ENCODE measurements at regions of chr17 and their contacts with region 1.

Region 1: GRCh38 chr17:2844416-2844815 is 48.2 kb downstream of the RAP1GAP2 start:
- DNase-seq: peak; percentile 39
- ATAC-seq: peak; percentile 10
- H3K4me3 Mint-ChIP-seq: no peak overlapping the region
- H3K27ac Mint-ChIP-seq: peak overlapping the region; percentile 73
- H3K4me1 Mint-ChIP-seq: peaks cover 29% of the 10 kb centered on the region
- H3K27me3 Mint-ChIP-seq: no peaks in the 10 kb centered on the region
- CTCF ChIP-seq: no peak

Region 2: GRCh38 chr17:2828397-2829038 is 15.9 kb before region 1 on chr17:
- CTCF ChIA-PET with region 1: interaction called, 21 read pairs
- POLR2A ChIA-PET with region 1: no interaction called
- DNase-seq: peak; percentile 95
- ATAC-seq: peak; percentile 91
- H3K4me3 Mint-ChIP-seq: no peak overlapping the region
- H3K27ac Mint-ChIP-seq: no peak overlapping the region
- H3K4me1 Mint-ChIP-seq: peaks cover 11% of the 10 kb centered on the region
- H3K27me3 Mint-ChIP-seq: no peaks in the 10 kb centered on the region
- CTCF ChIP-seq: peak; percentile 94

Region 3: DNA sequence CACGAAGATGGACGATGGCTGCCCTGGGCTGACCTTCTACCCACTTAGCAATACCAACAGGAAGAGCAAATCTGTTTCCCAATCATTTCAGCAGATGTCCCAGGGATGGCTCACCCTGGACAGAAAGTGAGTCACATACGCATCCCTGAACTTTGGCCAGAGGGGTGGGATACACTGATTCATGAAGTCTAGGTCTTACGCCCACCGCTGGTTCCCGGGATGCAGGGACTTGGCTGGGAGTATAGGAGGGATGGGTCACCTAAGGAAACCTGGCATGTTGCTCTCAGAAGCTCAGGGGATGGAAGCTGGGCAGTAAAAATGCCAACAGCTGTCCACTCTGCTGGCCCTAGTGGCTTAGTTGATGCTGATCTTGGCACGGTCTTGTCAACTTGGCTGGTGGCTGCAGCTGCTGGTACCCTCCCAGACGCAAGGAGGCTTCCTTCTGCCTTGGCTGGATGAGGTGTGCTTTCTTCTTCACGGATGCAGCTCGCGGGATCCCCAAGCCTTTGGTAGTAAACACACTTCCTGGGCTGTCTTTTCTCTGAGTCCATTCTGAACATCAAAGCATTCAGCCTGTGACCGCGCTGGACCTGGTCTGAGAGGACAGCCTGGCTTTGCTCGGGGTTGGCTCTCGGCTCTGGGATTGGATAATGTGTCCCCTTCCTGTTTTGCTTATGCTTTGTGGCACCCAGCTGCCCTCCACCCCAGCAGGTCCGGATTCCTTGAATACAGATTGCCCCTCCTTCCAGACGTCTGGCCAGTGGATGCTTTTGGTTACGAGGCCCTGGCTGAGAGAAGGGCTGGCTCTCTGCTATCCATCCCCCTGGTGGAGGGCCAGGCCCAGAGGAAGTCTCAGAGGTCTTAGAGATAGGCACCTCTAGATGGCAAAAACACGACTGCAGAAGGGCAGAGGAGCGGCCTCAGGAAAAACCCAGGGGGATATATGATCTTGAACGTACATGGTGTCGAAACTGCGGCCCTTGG is 23.3 kb after region 1 on chr17:
- CTCF ChIA-PET with region 1: interaction called, 53 read pairs
- POLR2A ChIA-PET with region 1: interaction called, 7 read pairs
- DNase-seq: peak; percentile 53
- ATAC-seq: peak; percentile 57
- H3K4me3 Mint-ChIP-seq: no peak overlapping the region
- H3K27ac Mint-ChIP-seq: peak overlapping the region; percentile 97
- H3K4me1 Mint-ChIP-seq: peaks cover 85% of the 10 kb centered on the region
- H3K27me3 Mint-ChIP-seq: no peaks in the 10 kb centered on the region
- CTCF ChIP-seq: no peak

Region 4: GRCh38 chr17:2904152-2904551 is 59.7 kb after region 1 on chr17:
- CTCF ChIA-PET with region 1: interaction called, 10 read pairs
- POLR2A ChIA-PET with region 1: no interaction called
- DNase-seq: no peak
- ATAC-seq: peak; percentile 13
- H3K4me3 Mint-ChIP-seq: no peak overlapping the region
- H3K27ac Mint-ChIP-seq: peak overlapping the region; percentile 71; the same call in 1 of the 2 replicates
- H3K4me1 Mint-ChIP-seq: peaks cover 24% of the 10 kb centered on the region
- H3K27me3 Mint-ChIP-seq: no peaks in the 10 kb centered on the region
- CTCF ChIP-seq: no peak

Region 5: GRCh38 chr17:2937331-2938003 is 93.1 kb after region 1 on chr17:
- CTCF ChIA-PET with region 1: interaction called, 114 read pairs
- POLR2A ChIA-PET with region 1: no interaction called
- DNase-seq: no peak
- ATAC-seq: no peak
- H3K4me3 Mint-ChIP-seq: no peak overlapping the region
- H3K27ac Mint-ChIP-seq: peak overlapping the region; percentile 79
- H3K4me1 Mint-ChIP-seq: peaks cover 11% of the 10 kb centered on the region
- H3K27me3 Mint-ChIP-seq: no peaks in the 10 kb centered on the region
- CTCF ChIP-seq: no peak